Esophagus muscularis mucosa (tissue), 4 donors: ENCODE measurements at regions of chr12 and their contacts with region 1.

Region 1: DNA sequence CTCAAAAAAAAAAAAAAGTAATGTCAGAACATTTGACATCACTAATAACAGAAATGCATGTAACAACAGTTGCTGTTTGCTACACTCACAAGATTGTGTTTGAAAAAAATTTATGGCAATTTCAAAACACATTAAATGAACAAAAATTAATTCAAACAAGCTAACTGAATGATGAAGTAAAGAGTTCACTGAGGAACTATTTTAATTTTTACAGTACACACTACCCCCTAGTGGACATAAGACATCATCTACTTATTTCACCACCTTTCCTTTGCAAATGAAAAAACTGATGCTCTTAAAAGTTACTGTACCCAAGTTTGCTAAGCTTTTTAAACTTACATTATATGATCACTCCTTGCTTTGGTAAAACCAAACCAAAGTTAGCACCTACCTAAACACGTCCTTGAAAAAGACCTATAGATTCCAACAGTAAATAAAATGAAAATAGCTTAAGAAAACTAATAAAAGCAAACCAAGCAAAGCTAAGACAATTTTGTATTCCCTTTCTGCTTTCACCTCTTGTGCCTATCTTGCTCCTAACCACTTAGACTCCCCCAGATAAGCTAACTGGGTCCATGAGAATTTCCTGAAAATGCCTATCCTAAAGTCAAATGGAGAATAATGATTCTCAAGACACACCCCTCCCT is 22.2 kb downstream of the UBE2N start:
- DNase-seq: no peak
- H3K4me3 ChIP-seq: peak overlapping the region in 1 of 4 donors; percentile 24
- H3K27ac ChIP-seq: no peak overlapping the region
- H3K4me1 ChIP-seq: peaks cover 38 to 65% (median 59%) of the 10 kb centered on the region in 4 donors
- H3K27me3 ChIP-seq: no peaks in the 10 kb centered on the region
- CTCF ChIP-seq: peak; percentile 60 to 74 (median 70)
- EP300 ChIP-seq: no peak
- POLR2A ChIP-seq: no peak

Region 2: DNA sequence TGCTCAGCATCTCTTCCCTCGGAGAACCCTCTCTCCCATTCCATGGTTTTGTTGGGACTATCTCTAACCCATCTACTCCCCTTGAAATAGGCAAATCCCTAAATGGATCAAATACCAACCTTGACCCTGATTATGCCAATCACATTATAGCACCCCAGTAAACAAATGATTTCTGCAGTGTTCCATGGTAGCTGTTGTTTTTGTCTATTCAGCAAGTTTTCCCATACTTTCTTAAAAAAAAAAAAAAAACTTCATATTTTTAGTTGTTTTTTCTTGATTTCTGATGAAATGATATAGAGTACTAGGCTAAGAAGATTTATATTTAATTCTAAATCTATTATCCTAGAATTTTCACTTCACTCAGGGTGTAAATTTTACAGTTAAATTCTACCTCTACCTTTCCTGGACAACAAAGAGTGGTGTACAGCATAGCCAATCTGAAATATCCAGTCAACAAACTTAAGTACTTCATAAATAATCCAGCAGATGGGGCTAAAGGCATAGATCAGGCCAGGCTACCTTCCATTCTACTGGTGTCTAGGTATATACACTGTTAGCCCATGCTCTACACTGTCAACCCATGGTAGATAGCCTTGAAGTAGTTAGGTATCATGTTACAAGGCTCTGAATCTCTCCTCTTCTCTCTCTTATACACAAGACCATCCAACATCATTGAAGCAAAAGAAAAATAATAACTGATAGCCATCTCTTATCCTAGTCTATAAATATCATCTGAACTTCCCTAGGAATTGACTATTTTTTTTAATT is 634.5 kb before region 1 on chr12:
- intact Hi-C with region 1: loop called (anchors 10 kb)
- DNase-seq: no peak
- H3K4me3 ChIP-seq: no peak overlapping the region
- H3K27ac ChIP-seq: no peak overlapping the region
- H3K4me1 ChIP-seq: no peaks in the 10 kb centered on the region
- H3K27me3 ChIP-seq: no peaks in the 10 kb centered on the region
- CTCF ChIP-seq: peak; percentile 44 to 60 (median 45)
- EP300 ChIP-seq: no peak
- POLR2A ChIP-seq: no peak

Region 3: DNA sequence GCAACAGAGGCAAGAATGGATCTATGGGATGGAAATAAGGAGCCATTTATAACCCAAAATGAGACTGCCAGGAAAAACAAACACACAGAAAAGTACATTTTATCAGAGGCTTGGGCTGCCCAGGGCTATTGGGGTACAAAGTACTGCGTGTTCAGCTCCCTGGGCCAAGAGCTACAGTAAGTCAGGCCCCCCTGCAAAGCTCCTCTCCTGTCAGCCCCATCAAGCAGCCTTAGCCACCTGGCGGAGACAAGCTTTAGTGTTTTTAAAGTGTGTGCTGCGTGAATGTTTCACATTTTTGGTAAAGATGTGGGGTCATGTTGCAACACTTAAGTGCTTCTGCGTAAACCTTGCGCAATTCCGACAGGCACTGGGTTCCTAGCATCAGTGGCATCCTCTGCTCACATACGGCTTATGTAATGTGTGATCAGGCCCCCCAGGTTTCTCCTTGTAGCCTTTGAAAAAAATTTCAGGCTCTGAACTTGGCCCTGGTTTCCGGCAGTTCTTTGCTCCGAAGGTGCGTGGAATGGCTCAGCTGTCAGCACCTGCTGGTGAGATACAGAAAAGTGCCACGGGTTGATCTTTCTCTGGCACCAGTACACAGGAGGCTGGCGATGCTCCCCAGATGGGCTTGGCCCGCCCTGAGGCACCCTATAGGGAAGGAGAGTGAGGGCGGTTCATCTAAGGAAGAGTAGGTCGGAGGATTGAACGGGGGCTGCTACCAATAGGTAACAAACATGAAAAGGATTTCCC is 291.8 kb before region 1 on chr12:
- intact Hi-C with region 1: no loop called
- DNase-seq: peak; percentile 94
- H3K4me3 ChIP-seq: peak overlapping the region in 2 of 4 donors; percentile 9 to 30
- H3K27ac ChIP-seq: peak overlapping the region; percentile 80 to 87 (median 84)
- H3K4me1 ChIP-seq: peaks cover 32 to 51% (median 40%) of the 10 kb centered on the region in 4 donors
- H3K27me3 ChIP-seq: no peaks in the 10 kb centered on the region
- CTCF ChIP-seq: peak in 2 of 3 experiments; percentile 34 to 54
- EP300 ChIP-seq: peak; percentile 99
- POLR2A ChIP-seq: no peak